Activated CD4-positive, alpha-beta T cell treated with anti-CD3 and anti-CD28 coated beads for 36 hours (primary cell): ENCODE measurements at regions of chr19 and their contacts with region 1.

Region 1: DNA sequence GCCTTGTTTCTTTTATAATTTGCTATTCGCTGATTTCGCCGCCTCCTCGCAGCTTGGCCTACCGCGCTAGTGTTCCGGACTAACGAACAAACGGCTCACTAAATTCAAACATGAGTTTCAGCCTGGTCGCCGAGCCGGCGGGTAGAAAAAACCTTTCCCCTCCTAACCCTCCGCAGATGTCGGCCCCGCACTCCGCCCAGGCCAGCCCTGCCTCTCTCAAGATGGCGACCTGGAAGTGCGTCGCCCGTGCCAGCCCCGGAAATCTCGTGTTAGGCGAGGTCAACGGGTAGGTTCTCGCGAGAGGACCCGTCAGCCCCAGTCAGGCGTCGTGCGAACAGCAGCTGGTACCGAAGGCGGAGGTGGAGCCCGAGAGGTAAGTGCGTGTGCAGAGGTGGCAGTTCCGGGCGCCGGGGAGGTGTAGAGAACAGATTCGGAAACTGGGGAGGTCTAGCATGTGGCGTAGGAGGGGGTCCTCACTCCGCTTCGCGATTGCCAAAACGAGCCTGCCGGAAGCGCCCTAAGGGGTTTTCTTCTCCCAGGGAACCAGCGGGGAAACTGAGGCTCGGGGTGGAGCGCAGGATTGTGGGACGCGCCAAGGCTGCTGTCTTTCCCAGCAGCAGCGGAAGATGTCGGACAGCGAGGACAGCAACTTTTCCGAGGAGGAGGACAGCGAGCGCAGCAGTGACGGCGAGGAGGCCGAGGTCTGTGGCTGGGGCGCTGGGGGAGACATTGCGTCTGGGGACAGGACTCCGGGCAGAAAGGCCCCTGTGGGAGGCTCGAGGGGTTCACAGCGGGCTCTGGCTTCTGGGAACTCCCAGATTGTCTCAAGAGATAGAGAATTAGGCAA is at the start of gene SUPT5H:
- DNase-seq: peak; percentile 99
- ATAC-seq: peak; percentile 89
- H3K4me3 Mint-ChIP-seq: peak within 1 kb of the TSS; percentile 100
- H3K27ac Mint-ChIP-seq: peak within 1 kb of the TSS; percentile 100
- H3K4me1 Mint-ChIP-seq: peaks cover 43% of the 10 kb centered on the region
- H3K27me3 Mint-ChIP-seq: no peaks in the 10 kb centered on the region
- total RNA-seq, gene SUPT5H: 157 to 165 TPM

Region 2: DNA sequence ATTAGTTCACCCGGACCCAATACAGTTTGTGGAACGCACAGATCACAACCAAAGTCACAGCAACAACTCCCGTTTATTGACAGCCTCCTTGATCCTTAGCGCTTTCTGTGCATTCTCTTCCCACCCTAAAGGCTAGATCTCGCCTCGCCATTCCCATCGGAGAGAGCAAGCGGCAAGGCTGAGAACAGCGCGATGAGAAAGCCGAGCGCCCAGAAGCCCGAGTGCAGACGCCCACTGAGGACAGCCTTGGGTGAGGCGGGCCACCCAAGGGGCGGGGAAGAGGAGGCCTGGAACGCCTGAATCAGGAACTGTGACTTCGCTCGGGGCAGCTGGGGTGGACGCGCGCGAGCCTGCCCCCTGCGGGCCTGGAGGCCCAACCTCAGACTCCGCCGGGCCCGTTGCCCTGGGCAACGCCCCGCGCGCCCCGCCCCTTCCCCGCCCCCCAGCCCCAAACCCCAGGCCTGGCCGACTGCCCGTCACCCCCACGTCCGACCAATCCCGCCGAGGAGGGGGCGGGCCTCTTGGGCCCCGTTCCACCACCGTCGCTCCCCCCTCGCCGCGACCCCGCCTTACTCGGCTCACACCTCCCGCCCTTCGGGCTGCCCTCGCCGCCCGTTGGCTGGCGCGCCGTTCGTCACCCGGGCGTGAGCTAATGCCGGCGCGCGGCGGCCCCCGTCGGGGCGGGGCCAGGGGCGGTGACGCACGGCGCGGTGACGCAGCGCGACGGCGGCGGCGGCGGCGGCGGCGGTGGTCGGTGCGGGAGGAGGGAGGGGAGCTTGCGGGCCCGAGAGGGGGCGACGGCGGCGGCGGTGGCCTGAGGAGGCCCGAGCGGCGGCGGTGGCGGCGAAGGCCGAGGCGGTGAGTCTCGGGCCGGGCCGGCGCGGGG is 103.5 kb before region 1 on chr19 and contains the start of gene SAMD4B:
- CTCF ChIA-PET with region 1: no interaction called
- POLR2A ChIA-PET with region 1: interaction called, 3 read pairs
- intact Hi-C with region 1: loop called in 1 of 2 experiments (anchors 1 kb)
- DNase-seq: peak; percentile 100
- ATAC-seq: peak; percentile 90
- H3K4me3 Mint-ChIP-seq: peak within 1 kb of the TSS; percentile 83
- H3K27ac Mint-ChIP-seq: peak within 1 kb of the TSS; percentile 88
- H3K4me1 Mint-ChIP-seq: peaks cover 69% of the 10 kb centered on the region
- H3K27me3 Mint-ChIP-seq: no peaks in the 10 kb centered on the region
- total RNA-seq, gene SAMD4B: 45.2 to 46.9 TPM

Region 3: GRCh38 chr19:39412100-39412866 is 33.2 kb before region 1 on chr19 and contains the start of gene PLEKHG2:
- CTCF ChIA-PET with region 1: interaction called, 7 read pairs
- POLR2A ChIA-PET with region 1: no interaction called
- intact Hi-C with region 1: loop called in 1 of 2 experiments (anchors 1 kb)
- DNase-seq: peak; percentile 98
- ATAC-seq: peak; percentile 73
- H3K4me3 Mint-ChIP-seq: peak within 1 kb of the TSS; percentile 73
- H3K27ac Mint-ChIP-seq: peak within 1 kb of the TSS; percentile 92
- H3K4me1 Mint-ChIP-seq: peaks cover 32% of the 10 kb centered on the region
- H3K27me3 Mint-ChIP-seq: no peaks in the 10 kb centered on the region
- total RNA-seq, gene PLEKHG2: 46.0 to 65.5 TPM

Region 4: DNA sequence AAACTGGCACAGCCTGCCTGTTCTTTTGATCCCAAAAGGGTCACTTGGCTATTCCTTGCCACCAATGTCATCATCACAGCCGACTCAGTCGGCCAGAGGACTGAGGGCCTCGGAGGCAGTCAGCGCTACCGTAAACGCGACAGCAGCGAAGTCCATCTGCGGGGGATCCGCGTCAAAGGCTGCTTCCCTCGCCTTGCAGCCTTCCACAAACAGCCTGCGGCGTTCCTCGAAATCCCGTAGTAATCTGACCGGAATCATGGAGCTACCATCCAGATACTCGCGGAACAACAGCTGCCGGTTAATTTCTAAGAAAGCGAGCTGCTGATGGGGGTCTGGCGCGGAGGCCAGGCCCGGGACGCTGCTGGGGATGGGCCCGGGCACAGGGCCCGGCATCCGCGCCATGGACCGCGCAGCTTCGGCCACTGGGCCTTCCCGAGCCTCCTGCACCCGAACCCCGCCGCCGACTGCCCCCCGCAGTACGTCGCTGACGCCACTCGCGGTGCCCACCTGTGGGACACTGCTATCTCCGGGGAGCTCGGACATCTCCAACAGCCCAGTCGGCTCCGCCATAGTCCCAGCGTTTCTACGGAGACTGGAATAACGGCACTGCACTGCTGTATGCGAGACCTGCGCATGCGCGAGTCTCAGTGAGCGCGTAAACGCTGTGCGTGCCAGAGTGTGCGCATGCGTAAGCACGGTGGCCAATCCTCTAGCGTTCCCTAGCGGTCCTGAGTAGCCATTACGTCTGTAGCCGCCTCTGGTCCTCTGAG is 86.9 kb after region 1 on chr19 and contains the start of gene EID2B:
- CTCF ChIA-PET with region 1: interaction called, 47 read pairs
- POLR2A ChIA-PET with region 1: interaction called, 3 read pairs
- intact Hi-C with region 1: loop called (anchors 1 kb)
- DNase-seq: peak; percentile 97
- ATAC-seq: peak; percentile 97
- H3K4me3 Mint-ChIP-seq: peak within 1 kb of the TSS; percentile 93
- H3K27ac Mint-ChIP-seq: peak within 1 kb of the TSS; percentile 86
- H3K4me1 Mint-ChIP-seq: peaks cover 26% of the 10 kb centered on the region
- H3K27me3 Mint-ChIP-seq: no peaks in the 10 kb centered on the region
- total RNA-seq, gene EID2B: 1.4 to 3.5 TPM

Region 5: GRCh38 chr19:39765091-39766076 is 319.9 kb after region 1 on chr19:
- CTCF ChIA-PET with region 1: interaction called, 3 read pairs
- POLR2A ChIA-PET with region 1: no interaction called
- intact Hi-C with region 1: loop called in 1 of 2 experiments (anchors 10 kb)
- DNase-seq: peak; percentile 63
- ATAC-seq: no peak
- H3K4me3 Mint-ChIP-seq: no peak overlapping the region
- H3K27ac Mint-ChIP-seq: no peak overlapping the region
- H3K4me1 Mint-ChIP-seq: no peaks in the 10 kb centered on the region
- H3K27me3 Mint-ChIP-seq: peaks cover 21% of the 10 kb centered on the region

Region 6: GRCh38 chr19:40348125-40348913 is 902.8 kb after region 1 on chr19 and contains the starts of genes C19orf47 and PLD3:
- CTCF ChIA-PET with region 1: no interaction called
- POLR2A ChIA-PET with region 1: no interaction called
- intact Hi-C with region 1: loop called in 1 of 2 experiments (anchors 1 kb)
- DNase-seq: peak; percentile 100
- ATAC-seq: peak; percentile 97
- H3K4me3 Mint-ChIP-seq: peak within 1 kb of the TSS; percentile 96
- H3K27ac Mint-ChIP-seq: peak within 1 kb of the TSS; percentile 91
- H3K4me1 Mint-ChIP-seq: peaks cover 26% of the 10 kb centered on the region
- H3K27me3 Mint-ChIP-seq: no peaks in the 10 kb centered on the region
- total RNA-seq, gene C19orf47: 15.8 to 17.7 TPM
- total RNA-seq, gene PLD3: 57.8 to 69.1 TPM